ENCODE measurements at regions of chr19 and their contacts with region 1.

Region 1: DNA sequence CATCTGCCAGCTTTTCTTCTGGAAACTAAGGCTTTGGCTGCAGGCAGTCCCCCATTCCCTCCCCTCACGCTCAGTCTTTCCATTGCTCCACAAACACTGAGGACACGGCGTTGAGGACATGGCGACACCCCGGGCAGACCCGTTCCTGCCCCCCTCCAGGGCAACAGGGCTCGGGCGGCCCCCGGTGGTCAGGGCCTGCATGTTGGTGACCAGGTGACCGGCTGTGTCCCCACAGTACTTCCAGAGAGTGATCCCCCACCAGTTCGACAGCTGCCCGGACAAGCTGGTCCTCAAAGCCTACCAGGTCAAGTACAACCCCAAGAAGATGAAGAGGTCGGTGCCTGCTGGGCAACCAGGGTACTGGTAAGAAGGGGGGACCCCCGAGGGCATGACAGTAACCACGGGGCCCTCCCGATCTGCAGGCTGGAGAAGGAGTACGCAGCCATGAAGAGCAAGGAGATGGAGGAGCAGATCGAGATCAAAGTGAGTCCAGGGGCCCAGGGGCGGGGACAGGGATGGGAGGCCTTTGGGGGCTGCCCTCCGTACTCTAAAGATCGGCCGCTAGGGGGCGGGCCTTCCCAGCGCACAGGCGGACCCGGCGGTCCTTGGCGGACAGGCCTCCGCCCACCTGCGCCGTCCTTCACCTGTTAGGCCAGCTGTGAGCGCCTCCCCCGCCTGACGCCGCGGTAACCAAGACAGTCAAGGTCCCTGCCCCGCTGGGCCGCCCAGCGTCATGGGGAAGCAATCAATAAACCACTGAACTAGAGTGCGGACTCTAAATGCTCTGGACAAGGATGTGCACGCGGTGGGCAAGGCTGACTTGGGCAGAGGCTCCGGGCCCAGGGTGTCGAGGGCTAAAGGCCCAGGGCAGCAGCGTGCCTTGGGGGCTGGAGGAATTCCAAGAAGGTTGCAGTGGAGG is 21.1 kb downstream of the PRR36 start:
- DNase-seq: no peak
- H3K4me3 ChIP-seq: no peak overlapping the region
- CTCF ChIP-seq: peak; percentile 86

Region 2: DNA sequence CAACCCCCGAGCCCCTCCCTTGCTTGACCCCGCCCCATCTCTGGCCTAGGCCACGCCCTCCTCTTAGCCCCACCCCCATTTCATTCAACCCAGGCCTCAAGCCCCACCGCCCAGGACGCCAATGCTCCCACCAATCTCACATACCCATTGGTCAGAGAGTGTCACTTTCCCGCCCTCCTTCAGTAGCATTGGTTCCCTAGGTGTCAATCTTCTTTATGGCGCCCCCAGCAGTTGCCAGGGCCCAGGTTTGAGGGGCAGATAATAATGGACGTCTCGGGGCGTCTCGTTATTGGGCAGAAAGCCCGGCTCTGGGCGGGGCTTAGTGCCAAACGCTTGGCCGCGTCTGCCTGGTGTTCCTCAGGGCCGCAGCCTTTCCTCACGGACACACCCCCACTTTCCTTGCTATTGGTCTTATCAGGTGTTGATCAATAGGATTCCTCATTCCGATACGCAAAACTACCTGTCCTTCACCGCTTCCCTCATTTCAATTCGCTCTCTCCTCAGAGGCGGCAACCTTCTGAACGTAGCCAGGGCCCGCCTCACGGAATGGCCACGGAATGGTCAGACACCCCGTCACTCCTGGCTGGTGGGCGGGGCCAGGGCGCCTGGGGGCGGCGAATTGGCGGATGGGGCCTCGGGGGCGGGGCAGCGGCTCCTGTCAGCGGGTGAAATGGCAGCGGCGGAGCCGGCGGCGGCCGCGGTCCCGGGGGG is 23.4 kb before region 1 on chr19 and contains the start of gene EVI5L:
- CTCF ChIA-PET with region 1: interaction called, 45 read pairs
- POLR2A ChIA-PET with region 1: no interaction called
- DNase-seq: peak; percentile 100
- H3K4me3 ChIP-seq: peak within 1 kb of the TSS; percentile 70
- CTCF ChIP-seq: no peak

Measured in AG04449 (cell line).